CD4-positive, alpha-beta T cell (primary cell): ENCODE measurements at regions of chr17 and their contacts with region 1.

Region 1: DNA sequence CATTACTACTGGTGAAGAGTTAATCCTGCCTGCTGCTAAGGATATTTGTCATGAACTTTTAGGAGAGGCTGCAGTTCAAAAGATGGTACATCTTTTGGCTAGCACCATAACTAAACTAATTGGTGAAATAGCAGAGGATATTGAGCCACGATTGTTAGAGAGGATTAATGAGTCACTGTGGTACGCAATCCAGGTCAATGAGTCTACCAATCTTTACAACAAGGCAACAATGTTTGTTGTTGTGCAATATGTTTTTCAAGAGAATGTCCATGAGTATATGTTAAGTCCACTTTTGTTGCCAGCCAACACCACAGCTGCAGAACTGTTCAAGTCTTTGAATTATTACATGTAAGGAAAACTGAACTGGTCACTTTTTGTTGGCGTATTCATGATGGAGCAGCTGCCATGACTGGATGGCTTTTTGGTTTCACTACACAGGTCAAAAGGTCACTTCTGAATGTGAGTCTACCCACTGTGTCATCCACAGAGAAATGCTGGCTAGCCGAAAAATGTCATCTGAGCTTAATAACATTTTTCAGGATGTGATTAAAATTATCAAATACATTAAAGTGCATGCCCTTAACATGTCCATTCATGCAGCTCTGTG is 402.6 kb upstream of the KIF2B start:
- DNase-seq: no peak
- ATAC-seq: no peak
- H3K4me3 ChIP-seq: no peak overlapping the region
- H3K4me3 Mint-ChIP-seq: no peak overlapping the region
- H3K27ac ChIP-seq: no peak overlapping the region
- H3K27ac Mint-ChIP-seq: no peak overlapping the region
- H3K4me1 ChIP-seq: no peaks in the 10 kb centered on the region
- H3K4me1 Mint-ChIP-seq: no peaks in the 10 kb centered on the region
- H3K27me3 ChIP-seq: no peaks in the 10 kb centered on the region
- H3K27me3 Mint-ChIP-seq: no peaks in the 10 kb centered on the region
- CTCF ChIP-seq: no peak

Region 2: DNA sequence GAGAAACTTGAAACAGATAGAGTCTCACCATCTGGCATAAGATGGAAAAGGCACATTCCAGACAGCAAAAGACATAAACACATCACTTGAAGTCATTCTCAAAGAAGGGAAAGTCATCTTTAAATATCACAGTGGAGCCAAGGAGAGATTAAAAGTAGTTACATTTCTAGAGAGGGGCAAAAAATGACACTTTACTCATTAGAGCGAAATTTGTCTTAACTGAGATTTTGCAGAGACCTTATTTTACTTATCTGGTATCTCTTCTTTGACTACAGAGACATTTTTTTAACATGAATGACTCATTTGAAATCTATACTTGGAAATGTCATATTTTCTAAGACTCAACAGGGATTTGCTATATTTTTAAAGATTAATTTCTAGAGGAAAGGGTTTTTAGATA is 63.6 kb after region 1 on chr17:
- CTCF ChIA-PET with region 1: no interaction called
- POLR2A ChIA-PET with region 1: no interaction called
- intact Hi-C with region 1: loop called (anchors 10 kb)
- DNase-seq: no peak
- ATAC-seq: no peak
- H3K4me3 ChIP-seq: no peak overlapping the region
- H3K4me3 Mint-ChIP-seq: no peak overlapping the region
- H3K27ac ChIP-seq: no peak overlapping the region
- H3K27ac Mint-ChIP-seq: no peak overlapping the region
- H3K4me1 ChIP-seq: no peaks in the 10 kb centered on the region
- H3K4me1 Mint-ChIP-seq: no peaks in the 10 kb centered on the region
- H3K27me3 ChIP-seq: no peaks in the 10 kb centered on the region
- H3K27me3 Mint-ChIP-seq: no peaks in the 10 kb centered on the region
- CTCF ChIP-seq: no peak